Activated CD8-positive, alpha-beta T cell treated with anti-CD3 and anti-CD28 coated beads for 36 hours (primary cell): ENCODE measurements at regions of chr1 and their contacts with region 1.

Region 1: GRCh38 chr1:201408176-201408833 is 9.2 kb upstream of the LAD1 start:
- DNase-seq: peak; percentile 88
- ATAC-seq: peak; percentile 96
- H3K4me3 Mint-ChIP-seq: no peak overlapping the region
- H3K27ac Mint-ChIP-seq: no peak overlapping the region
- H3K4me1 Mint-ChIP-seq: no peaks in the 10 kb centered on the region
- H3K27me3 Mint-ChIP-seq: peaks cover 5% of the 10 kb centered on the region
- CTCF ChIP-seq: peak; percentile 95

Region 2: GRCh38 chr1:201385299-201385891 is 22.9 kb before region 1 on chr1:
- CTCF ChIA-PET with region 1: interaction called, 20 read pairs
- POLR2A ChIA-PET with region 1: no interaction called
- intact Hi-C with region 1: no loop called
- DNase-seq: peak; percentile 71
- ATAC-seq: peak; percentile 90
- H3K4me3 Mint-ChIP-seq: no peak overlapping the region
- H3K27ac Mint-ChIP-seq: no peak overlapping the region
- H3K4me1 Mint-ChIP-seq: no peaks in the 10 kb centered on the region
- H3K27me3 Mint-ChIP-seq: peaks cover 3% of the 10 kb centered on the region
- CTCF ChIP-seq: peak; percentile 68